Heart left ventricle (tissue), 16 donors: ENCODE measurements at regions of chr18 and their contacts with region 1.

Region 1: DNA sequence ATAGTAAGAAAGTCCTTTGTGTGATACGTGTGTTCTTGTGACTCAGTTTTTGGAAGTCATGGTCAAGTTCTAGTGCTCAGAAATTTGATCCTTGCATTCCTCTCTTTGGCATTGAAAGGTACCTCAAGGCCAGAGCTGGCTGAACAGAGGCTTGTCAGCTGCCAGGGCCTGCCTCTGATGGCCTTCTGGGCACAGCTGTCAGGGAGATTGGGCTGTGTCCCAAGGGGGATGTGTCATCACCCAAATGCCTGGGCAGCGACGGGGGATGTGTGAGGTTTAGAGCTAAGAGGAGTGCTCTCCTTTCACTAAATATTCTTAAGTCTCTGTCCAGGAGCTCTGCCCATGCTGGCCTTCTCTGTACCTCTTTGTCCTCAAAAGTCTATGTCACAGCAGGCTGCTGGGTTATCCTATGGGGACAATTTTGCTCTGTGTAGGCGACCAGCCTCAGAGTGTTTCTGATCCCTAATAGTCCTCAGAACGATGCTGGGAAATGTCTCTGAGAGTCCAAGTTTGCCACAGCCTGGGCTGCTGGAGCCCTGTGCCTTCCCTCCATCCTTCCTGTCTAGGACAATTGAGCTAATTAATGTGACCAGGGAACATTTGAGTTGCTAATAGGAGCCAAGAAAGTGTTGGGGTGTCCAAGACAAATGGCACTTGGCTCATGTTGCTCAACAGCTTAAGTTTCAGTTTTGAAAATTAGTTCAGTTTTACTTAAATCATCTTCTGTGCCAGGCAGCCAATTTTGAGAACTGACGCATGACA is 115.4 kb upstream of the ZNF521 start:
- DNase-seq: peak; percentile 59 to 87 (median 78)
- ATAC-seq: peak; percentile 98 to 99 (median 98)
- H3K4me3 ChIP-seq: no peak overlapping the region
- H3K27ac ChIP-seq: peak overlapping the region in 10 of 12 donors; percentile 18 to 64 (median 38)
- H3K4me1 ChIP-seq: peaks cover 0 to 27% (median 7%) of the 10 kb centered on the region in 12 donors
- H3K27me3 ChIP-seq: no peaks in the 10 kb centered on the region
- CTCF ChIP-seq: no peak
- POLR2A ChIP-seq: no peak

Region 2: DNA sequence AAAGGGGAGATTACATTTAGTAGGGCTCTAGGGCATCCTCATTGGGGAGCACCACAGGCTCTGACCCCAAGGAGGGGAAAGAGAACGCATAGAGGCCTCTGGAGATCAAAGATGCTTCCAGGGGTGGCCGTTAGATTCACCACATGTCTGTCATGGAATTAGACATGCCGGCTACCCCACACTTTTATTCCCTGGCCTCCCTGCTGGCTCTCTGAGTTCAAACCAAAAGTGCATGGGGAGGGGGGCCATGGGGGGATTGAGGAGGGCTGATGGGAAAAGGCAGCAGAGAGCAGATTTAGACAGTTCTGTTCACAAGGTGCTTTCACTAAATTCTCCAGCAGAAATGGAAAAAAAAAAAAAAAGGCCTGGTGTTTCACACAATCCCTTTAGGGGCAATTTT is 51.0 kb before region 1 on chr18:
- intact Hi-C with region 1: loop called in 1 of 10 experiments (anchors 10 kb)
- DNase-seq: no peak
- ATAC-seq: no peak
- H3K4me3 ChIP-seq: no peak overlapping the region
- H3K27ac ChIP-seq: no peak overlapping the region
- H3K4me1 ChIP-seq: peaks cover 0 to 7% (median 0%) of the 10 kb centered on the region in 12 donors
- H3K27me3 ChIP-seq: no peaks in the 10 kb centered on the region
- CTCF ChIP-seq: no peak
- POLR2A ChIP-seq: no peak